ENCODE measurements at regions of chr11 and their contacts with region 1.

Region 1: GRCh38 chr11:119481021-119481666 is 58.2 kb upstream of the THY1 start:
- DNase-seq: peak; percentile 67 to 90
- H3K4me3 ChIP-seq: no peak overlapping the region
- H3K27ac ChIP-seq: no peak overlapping the region
- H3K4me1 ChIP-seq: peaks cover 12% of the 10 kb centered on the region
- H3K27me3 ChIP-seq: no peaks in the 10 kb centered on the region
- CTCF ChIP-seq: peak; percentile 86 to 88 (median 87)
- POLR2A ChIP-seq: no peak

Region 2: GRCh38 chr11:119741369-119742262 is 260.5 kb after region 1 on chr11:
- intact Hi-C with region 1: loop called (anchors 10 kb)
- DNase-seq: no peak
- H3K4me3 ChIP-seq: peak overlapping the region; percentile 29 to 39
- H3K27ac ChIP-seq: no peak overlapping the region
- H3K4me1 ChIP-seq: peaks cover 25% of the 10 kb centered on the region
- H3K27me3 ChIP-seq: no peaks in the 10 kb centered on the region
- CTCF ChIP-seq: peak; percentile 26 to 39 (median 38)
- POLR2A ChIP-seq: no peak

Measured in vagina (tissue), 2 donors.